A549 (cell line): ENCODE measurements at regions of chr19 and their contacts with region 1.

Region 1: DNA sequence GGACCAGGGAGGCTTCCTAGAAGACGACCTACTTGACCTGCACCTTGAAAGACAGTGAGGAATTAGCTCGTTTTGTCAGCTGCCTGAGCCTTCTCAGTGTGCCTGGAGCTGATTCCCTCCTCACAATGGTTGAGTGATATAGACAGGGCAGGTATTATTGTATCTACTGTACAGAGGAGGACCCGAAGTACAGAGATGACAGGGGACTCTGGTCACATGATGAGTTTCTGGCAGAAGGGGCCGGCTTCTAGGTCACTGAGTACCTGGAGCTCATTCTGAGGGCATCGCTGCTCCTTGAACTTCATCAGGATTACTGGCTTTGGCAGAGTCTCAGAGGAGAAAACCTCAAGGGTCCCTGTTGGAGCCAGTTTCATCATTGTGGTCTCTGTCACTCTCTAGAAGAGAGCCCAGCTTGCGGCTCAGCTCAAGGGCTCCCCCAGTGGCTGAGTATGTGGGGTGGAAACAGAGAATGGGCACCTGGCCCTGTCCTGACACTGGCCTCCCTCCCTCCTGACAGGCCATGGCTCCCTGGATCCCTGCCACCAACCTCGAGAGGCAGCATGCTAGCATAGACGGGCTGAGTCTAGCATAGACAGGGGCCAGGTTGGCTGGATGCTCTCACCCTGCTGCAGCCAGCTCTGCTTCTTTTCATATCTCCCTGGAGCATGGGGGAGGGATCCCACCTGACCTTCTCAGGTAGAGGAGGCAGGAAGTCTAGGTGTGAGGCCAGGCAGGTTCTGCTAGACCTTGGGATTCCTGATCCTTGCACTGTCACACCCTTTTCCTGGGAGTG is 38.7 kb downstream of the NFIX start:
- DNase-seq: peak; percentile 42 to 68
- ATAC-seq: peak; percentile 84 to 94; a peak in 5 of 6 replicates
- H3K4me3 ChIP-seq: no peak overlapping the region
- H3K27ac ChIP-seq: no peak overlapping the region
- H3K4me1 ChIP-seq: peaks cover 17% of the 10 kb centered on the region
- CTCF ChIP-seq: peak; percentile 47
- EP300 ChIP-seq: no peak
- POLR2A ChIP-seq: no peak
- RAD21 ChIP-seq: peak; percentile 32 to 52

Region 2: GRCh38 chr19:12965017-12965811 is 68.8 kb before region 1 on chr19:
- CTCF ChIA-PET with region 1: interaction called, 10 read pairs
- POLR2A ChIA-PET with region 1: no interaction called
- DNase-seq: peak; percentile 53 to 76
- ATAC-seq: peak; percentile 97 to 98
- H3K4me3 ChIP-seq: peak overlapping the region; percentile 53
- H3K27ac ChIP-seq: peak overlapping the region; percentile 91
- H3K4me1 ChIP-seq: peaks cover 11% of the 10 kb centered on the region; the same call in 1 of the 3 replicates
- CTCF ChIP-seq: peak; percentile 67
- EP300 ChIP-seq: no peak
- POLR2A ChIP-seq: no peak
- RAD21 ChIP-seq: peak; percentile 53 to 63

Region 3: DNA sequence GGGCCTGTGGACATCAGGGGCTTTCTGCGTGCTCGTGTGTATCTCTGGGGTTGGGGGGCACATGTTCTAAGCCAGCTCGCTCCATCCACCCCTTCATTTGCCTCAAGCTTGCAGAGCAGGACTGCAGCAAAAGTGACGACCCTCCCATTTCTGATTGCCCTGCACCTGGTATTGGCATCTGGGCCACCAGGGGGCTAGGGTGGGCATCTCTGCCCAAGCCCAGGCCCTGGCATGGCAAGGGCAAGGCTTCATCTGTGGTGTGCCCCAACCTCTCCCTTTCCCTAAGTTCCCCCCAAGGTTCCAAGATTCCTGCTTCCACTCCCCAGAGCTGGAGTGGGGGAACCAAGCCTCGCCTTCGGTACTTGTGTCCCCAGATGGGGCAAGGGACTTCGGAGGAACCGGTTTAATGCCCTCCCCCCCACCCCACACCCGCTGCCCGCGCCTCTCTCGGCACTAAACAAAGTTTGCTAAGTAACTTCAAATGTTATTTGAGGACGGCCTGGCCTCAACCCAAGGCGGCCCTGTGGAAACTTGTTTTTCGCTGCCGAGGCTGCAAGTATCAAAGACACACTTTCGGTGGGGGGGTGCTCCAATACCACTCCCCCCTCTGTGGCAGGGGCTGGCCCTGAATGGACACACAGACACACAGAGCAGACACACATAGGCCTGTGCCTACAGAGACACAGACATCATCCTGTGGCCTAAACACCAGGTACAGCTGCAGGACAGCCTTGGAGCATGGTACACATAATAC is 26.5 kb before region 1 on chr19:
- CTCF ChIA-PET with region 1: interaction called, 13 read pairs
- POLR2A ChIA-PET with region 1: no interaction called
- DNase-seq: no peak
- ATAC-seq: no peak
- H3K4me3 ChIP-seq: no peak overlapping the region
- H3K27ac ChIP-seq: no peak overlapping the region
- H3K4me1 ChIP-seq: no peaks in the 10 kb centered on the region
- CTCF ChIP-seq: no peak
- EP300 ChIP-seq: no peak
- POLR2A ChIP-seq: no peak
- RAD21 ChIP-seq: no peak

Region 4: GRCh38 chr19:13022859-13023636 is 11.0 kb before region 1 on chr19:
- CTCF ChIA-PET with region 1: interaction called, 12 read pairs
- POLR2A ChIA-PET with region 1: no interaction called
- DNase-seq: peak in 1 of 2 experiments; percentile 25
- ATAC-seq: no peak
- H3K4me3 ChIP-seq: peak overlapping the region; percentile 36
- H3K27ac ChIP-seq: peak overlapping the region in 1 of 2 experiments; percentile 58; a peak in 3 of 6 replicates
- H3K4me1 ChIP-seq: peaks cover 19% of the 10 kb centered on the region
- CTCF ChIP-seq: no peak
- EP300 ChIP-seq: no peak
- POLR2A ChIP-seq: no peak
- RAD21 ChIP-seq: no peak

Region 5: GRCh38 chr19:13044231-13044836 is 10.3 kb after region 1 on chr19:
- CTCF ChIA-PET with region 1: interaction called, 28 read pairs
- POLR2A ChIA-PET with region 1: no interaction called
- DNase-seq: no peak
- ATAC-seq: no peak
- H3K4me3 ChIP-seq: no peak overlapping the region
- H3K27ac ChIP-seq: no peak overlapping the region
- H3K4me1 ChIP-seq: no peaks in the 10 kb centered on the region
- CTCF ChIP-seq: no peak
- EP300 ChIP-seq: no peak
- POLR2A ChIP-seq: no peak
- RAD21 ChIP-seq: no peak